GM12878 (cell line): ENCODE measurements at regions of chr6 and their contacts with region 1.

Region 1: DNA sequence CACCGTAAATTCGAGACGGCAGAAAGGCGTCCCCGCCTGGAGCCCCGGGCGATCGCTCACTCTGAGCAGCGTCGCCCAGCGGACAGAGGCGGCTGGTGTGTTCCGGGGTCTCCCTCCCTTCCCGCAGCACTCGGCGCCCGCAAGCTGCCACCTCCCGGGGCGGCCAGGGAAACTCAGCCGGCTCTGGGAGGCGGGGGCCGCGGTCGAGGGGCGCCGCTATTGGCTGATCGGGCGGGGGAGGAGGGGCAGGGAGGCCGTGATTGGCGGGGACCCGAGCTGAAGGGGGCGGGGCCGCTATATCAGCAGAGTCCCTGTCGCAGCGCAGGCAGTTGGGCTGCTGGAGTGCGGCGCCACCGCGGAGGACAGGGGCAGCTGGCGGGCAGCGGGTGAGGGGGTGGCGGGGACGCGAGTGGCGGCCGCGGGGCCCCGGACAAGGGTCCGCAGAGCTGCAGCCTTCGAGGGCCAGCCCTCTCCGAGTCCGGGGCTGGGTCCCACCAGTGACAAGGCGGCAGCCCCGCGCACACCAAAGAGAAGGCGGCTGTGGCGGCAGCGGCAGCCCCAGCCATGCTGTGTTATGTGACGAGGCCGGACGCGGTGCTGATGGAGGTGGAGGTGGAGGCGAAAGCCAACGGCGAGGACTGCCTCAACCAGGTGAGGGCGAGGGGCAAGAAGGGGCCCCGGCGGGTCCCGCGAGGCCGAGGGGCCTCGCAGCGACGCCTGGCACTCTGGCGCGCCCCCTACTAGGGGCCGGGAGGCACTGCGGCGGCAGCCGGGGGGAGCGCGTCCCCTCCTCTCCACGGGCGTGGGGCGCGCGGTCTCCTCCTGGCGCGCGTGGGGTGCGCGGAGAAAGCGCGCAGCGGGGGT is at the start of gene MYLIP:
- DNase-seq: peak; percentile 74
- ATAC-seq: peak; percentile 87
- H3K4me3 ChIP-seq: peak within 1 kb of the TSS; percentile 86
- H3K27ac ChIP-seq: peak within 1 kb of the TSS; percentile 53
- H3K4me1 ChIP-seq: peaks cover 6% of the 10 kb centered on the region
- H3K27me3 ChIP-seq: no peaks in the 10 kb centered on the region
- CTCF ChIP-seq: peak; percentile 73 to 91 (median 79)
- EP300 ChIP-seq: peak in 1 of 2 experiments; percentile 12; a peak in 1 of 4 replicates
- POLR2A ChIP-seq: peak; percentile 100
- RAD21 ChIP-seq: peak; percentile 77
- polyA plus RNA-seq, gene MYLIP: 5.3 to 5.8 TPM

Region 2: GRCh38 chr6:15735567-15736265 is 393.3 kb before region 1 on chr6:
- CTCF ChIA-PET with region 1: interaction called, 7 read pairs
- POLR2A ChIA-PET with region 1: interaction called, 7 read pairs
- RAD21 ChIA-PET with region 1: interaction called, 11 read pairs
- SMC1A ChIA-PET with region 1: no interaction called
- in situ Hi-C with region 1: no loop called
- intact Hi-C with region 1: no loop called
- DNase-seq: no peak
- ATAC-seq: peak; percentile 74
- H3K4me3 ChIP-seq: no peak overlapping the region
- H3K27ac ChIP-seq: no peak overlapping the region
- H3K4me1 ChIP-seq: peaks cover 4% of the 10 kb centered on the region; the same call in 1 of the 2 replicates
- H3K27me3 ChIP-seq: no peaks in the 10 kb centered on the region
- CTCF ChIP-seq: no peak
- EP300 ChIP-seq: peak; percentile 60 to 74; a peak in 3 of 4 replicates
- POLR2A ChIP-seq: no peak
- RAD21 ChIP-seq: no peak

Region 3: GRCh38 chr6:15870333-15871043 is 258.5 kb before region 1 on chr6:
- CTCF ChIA-PET with region 1: interaction called, 6 read pairs
- POLR2A ChIA-PET with region 1: interaction called, 6 read pairs
- RAD21 ChIA-PET with region 1: interaction called, 14 read pairs
- SMC1A ChIA-PET with region 1: interaction called, 4 read pairs
- in situ Hi-C with region 1: no loop called
- intact Hi-C with region 1: no loop called
- DNase-seq: no peak
- ATAC-seq: no peak
- H3K4me3 ChIP-seq: no peak overlapping the region
- H3K27ac ChIP-seq: no peak overlapping the region
- H3K4me1 ChIP-seq: no peaks in the 10 kb centered on the region
- H3K27me3 ChIP-seq: no peaks in the 10 kb centered on the region
- CTCF ChIP-seq: no peak
- EP300 ChIP-seq: no peak
- POLR2A ChIP-seq: no peak
- RAD21 ChIP-seq: no peak

Region 4: DNA sequence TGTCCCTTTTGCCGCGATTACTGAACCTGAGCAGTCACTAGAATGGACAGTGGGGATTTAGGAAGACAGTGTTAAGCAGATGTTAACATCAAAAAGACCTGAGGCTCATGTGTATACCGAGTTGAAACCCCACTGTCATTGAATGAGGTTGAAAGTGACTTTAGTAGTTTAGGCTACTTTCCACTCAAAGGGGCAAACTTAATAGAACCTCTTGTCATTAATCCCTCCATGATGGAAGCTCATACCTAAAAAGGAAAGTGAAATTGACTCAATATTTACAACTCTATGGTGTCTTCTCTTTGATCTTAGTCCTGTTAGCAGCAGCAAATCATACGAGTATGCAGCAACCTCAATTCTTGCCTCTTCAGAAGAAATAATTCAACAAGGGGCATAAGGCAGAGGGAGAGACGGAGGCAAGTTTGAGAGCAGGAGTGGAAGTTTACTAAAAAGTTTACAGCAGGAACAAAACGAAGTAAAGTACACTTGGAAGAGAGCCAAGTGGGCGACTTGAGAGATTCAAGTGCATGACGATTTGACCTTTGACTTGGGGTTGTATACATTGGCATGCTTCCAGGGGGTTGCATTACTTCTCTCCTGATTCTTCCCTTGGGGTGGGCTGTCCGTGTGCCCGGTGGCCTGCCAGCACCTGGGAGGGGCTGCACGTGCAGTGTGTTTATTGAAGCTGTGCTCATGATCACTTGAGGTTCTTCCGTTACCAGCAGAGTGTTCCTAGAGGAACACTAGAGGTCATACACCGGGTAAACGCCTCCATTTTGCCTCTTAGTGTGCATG is 172.9 kb before region 1 on chr6:
- CTCF ChIA-PET with region 1: interaction called, 9 read pairs
- POLR2A ChIA-PET with region 1: interaction called, 7 read pairs
- RAD21 ChIA-PET with region 1: interaction called, 13 read pairs
- SMC1A ChIA-PET with region 1: interaction called, 6 read pairs
- in situ Hi-C with region 1: no loop called
- intact Hi-C with region 1: loop called (anchors 5 kb)
- DNase-seq: no peak
- ATAC-seq: no peak
- H3K4me3 ChIP-seq: no peak overlapping the region
- H3K27ac ChIP-seq: no peak overlapping the region
- H3K4me1 ChIP-seq: peaks cover 28% of the 10 kb centered on the region
- H3K27me3 ChIP-seq: no peaks in the 10 kb centered on the region
- CTCF ChIP-seq: no peak
- EP300 ChIP-seq: no peak
- POLR2A ChIP-seq: no peak
- RAD21 ChIP-seq: no peak

Region 5: DNA sequence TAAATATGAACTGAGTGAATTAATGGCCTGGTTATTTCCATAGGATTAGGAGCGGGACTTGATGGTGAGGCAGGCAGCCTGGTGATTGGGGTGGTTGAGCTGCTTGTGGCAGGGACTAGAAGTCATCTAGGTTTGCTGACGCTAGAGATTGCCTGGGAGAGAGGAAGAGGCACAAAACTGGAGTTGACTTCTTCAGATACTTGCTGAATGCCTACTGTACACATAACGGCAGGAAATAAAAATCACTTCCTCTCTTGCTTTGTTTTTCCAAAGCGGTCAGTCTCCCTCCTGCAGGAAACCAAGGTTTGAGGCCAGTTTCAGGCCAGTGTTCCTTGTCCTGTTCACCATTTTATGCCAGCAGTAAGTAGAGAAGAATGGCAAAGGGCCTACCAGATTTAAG is 36.9 kb before region 1 on chr6:
- CTCF ChIA-PET with region 1: interaction called, 4 read pairs
- POLR2A ChIA-PET with region 1: interaction called, 5 read pairs
- RAD21 ChIA-PET with region 1: interaction called, 11 read pairs
- SMC1A ChIA-PET with region 1: interaction called, 7 read pairs
- in situ Hi-C with region 1: no loop called
- intact Hi-C with region 1: loop called (anchors 2 kb)
- DNase-seq: no peak
- ATAC-seq: no peak
- H3K4me3 ChIP-seq: no peak overlapping the region
- H3K27ac ChIP-seq: no peak overlapping the region
- H3K4me1 ChIP-seq: no peaks in the 10 kb centered on the region
- H3K27me3 ChIP-seq: no peaks in the 10 kb centered on the region
- CTCF ChIP-seq: no peak
- EP300 ChIP-seq: no peak
- POLR2A ChIP-seq: no peak
- RAD21 ChIP-seq: no peak

Region 6: DNA sequence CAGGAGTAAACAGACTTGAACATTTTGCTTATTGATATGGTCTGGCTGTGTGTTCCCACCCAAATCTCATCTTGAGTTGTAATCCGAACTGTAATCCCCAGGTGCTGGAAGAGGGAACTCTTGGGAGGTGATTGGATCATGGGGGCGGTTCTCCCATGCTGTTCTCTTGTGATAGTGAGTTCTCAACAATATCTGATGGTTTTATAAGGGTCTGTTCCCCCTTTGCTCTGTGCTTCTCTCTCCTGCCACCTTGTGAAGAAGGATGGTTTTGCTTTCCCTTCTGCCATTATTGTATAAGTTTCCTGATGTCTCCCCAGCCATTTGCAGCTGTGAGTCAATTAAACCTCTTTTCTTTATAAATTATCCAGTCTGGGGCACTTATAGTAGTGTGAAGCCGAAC is 39.9 kb after region 1 on chr6:
- CTCF ChIA-PET with region 1: interaction called, 21 read pairs
- POLR2A ChIA-PET with region 1: interaction called, 9 read pairs
- RAD21 ChIA-PET with region 1: interaction called, 18 read pairs
- SMC1A ChIA-PET with region 1: interaction called, 42 read pairs
- in situ Hi-C with region 1: no loop called
- intact Hi-C with region 1: loop called (anchors 5 kb)
- DNase-seq: peak; percentile 32
- ATAC-seq: peak; percentile 86
- H3K4me3 ChIP-seq: no peak overlapping the region
- H3K27ac ChIP-seq: no peak overlapping the region
- H3K4me1 ChIP-seq: peaks cover 13% of the 10 kb centered on the region
- H3K27me3 ChIP-seq: no peaks in the 10 kb centered on the region
- CTCF ChIP-seq: peak; percentile 56 to 66 (median 65)
- EP300 ChIP-seq: no peak
- POLR2A ChIP-seq: no peak
- RAD21 ChIP-seq: peak; percentile 87

Region 7: DNA sequence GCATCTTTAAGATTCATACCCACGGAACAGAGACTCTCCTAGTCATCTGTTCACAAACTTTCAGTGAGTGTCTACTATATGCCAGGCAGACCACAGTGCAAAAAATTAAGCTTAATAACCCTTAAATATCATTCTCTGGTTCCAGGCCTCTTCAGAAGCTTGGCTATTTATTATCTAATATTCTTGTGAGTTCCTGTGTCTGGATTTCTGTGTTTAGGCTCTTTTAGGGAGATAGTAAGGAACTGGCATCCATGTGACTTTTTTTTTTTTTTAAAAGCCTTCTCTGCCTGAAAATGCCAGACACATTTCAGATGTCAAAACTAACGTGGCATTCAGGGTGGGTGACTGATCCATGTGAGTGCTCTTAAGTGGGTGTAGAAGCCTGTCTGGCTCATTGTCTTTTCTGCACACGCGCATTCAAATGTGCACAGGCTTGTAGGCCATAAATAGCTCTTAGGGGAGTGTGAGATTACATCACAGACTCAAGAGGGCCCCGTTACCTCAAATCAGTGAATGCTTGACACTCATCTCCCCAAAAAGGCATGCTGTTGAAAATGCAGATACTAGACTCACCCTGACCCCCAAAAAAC is 251.3 kb after region 1 on chr6:
- CTCF ChIA-PET with region 1: no interaction called
- POLR2A ChIA-PET with region 1: no interaction called
- RAD21 ChIA-PET with region 1: no interaction called
- SMC1A ChIA-PET with region 1: no interaction called
- in situ Hi-C with region 1: no loop called
- intact Hi-C with region 1: no loop called
- DNase-seq: no peak
- ATAC-seq: peak; percentile 51
- H3K4me3 ChIP-seq: no peak overlapping the region
- H3K27ac ChIP-seq: no peak overlapping the region
- H3K4me1 ChIP-seq: peaks cover 13% of the 10 kb centered on the region
- H3K27me3 ChIP-seq: no peaks in the 10 kb centered on the region
- CTCF ChIP-seq: no peak
- EP300 ChIP-seq: no peak
- POLR2A ChIP-seq: no peak
- RAD21 ChIP-seq: no peak